HCT116 (cell line): ENCODE measurements at regions of chr18 and their contacts with region 1.

Region 1: GRCh38 chr18:50194631-50195532 is at the start of gene MYO5B:
- DNase-seq: peak; percentile 42
- ATAC-seq: peak; percentile 94
- H3K4me3 ChIP-seq: peak within 1 kb of the TSS; percentile 65 to 71
- H3K27ac ChIP-seq: peak within 1 kb of the TSS; percentile 55; the same call in 1 of the 2 replicates
- H3K4me1 ChIP-seq: peaks cover 6 to 21% of the 10 kb centered on the region in 2 experiments; a peak in 1 of 4 replicates
- H3K27me3 ChIP-seq: no peaks in the 10 kb centered on the region
- CTCF ChIP-seq: peak in 2 of 3 experiments; percentile 32 to 45; a peak in 3 of 6 replicates
- POLR2A ChIP-seq: no peak
- RAD21 ChIP-seq: peak; percentile 50
- total RNA-seq, gene MYO5B: 32.1 TPM

Region 2: DNA sequence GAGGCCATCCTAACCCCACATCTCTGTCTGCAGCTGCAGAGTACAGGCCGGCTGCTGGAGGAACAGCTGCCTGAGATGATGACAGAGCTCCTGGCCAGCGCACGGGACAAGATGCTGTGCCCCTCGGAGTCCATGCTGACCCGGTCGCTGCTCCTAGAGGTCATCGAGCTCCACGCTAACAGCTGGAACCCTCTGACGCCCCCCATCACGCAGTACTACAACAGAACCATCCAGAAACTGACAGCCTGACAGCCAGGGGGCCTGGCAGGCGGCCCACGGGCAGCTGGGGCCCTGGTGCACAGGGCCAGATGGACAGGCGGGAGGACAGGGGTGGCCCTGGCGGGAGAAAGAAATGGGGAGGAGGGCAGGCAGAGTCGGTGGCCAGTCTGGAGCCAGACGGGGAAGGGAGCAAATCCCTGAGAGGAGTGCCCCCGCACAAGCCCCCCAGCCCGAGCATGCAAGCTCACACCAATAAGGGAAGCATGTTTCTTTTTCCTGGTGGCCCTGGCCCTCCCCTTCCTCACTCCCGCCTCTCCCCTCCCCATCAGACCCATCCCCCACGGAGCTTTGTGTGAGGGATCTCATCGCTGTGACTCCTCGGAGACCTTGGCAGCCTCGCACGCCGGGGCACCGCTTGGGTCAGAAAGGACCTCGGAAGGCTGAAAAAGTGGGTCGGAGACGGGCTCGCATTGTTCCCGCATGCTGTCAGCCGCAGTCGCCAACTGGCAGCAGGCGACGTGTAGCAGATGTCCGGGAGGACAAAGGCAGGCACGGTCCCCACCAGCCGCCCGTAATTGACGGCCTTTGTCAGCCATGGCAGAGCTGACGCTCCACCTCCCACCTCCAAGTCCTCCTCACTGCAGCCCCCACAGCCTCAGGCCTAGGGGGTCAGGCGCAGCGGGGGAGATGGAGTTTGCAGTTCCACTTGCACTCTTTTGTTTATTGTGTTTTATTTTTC is 1335.3 kb before region 1 on chr18:
- CTCF ChIA-PET with region 1: no interaction called
- POLR2A ChIA-PET with region 1: no interaction called
- RAD21 ChIA-PET with region 1: no interaction called
- intact Hi-C with region 1: no loop called
- DNase-seq: no peak
- ATAC-seq: no peak
- H3K4me3 ChIP-seq: no peak overlapping the region
- H3K27ac ChIP-seq: no peak overlapping the region
- H3K4me1 ChIP-seq: peaks cover 0 to 6% of the 10 kb centered on the region in 2 experiments; a peak in 1 of 4 replicates
- H3K27me3 ChIP-seq: no peaks in the 10 kb centered on the region
- CTCF ChIP-seq: no peak
- POLR2A ChIP-seq: no peak
- RAD21 ChIP-seq: no peak

Region 3: GRCh38 chr18:50051288-50051687 is 143.6 kb before region 1 on chr18:
- CTCF ChIA-PET with region 1: no interaction called
- POLR2A ChIA-PET with region 1: no interaction called
- RAD21 ChIA-PET with region 1: no interaction called
- intact Hi-C with region 1: loop called (anchors 2 kb)
- DNase-seq: no peak
- ATAC-seq: peak; percentile 76
- H3K4me3 ChIP-seq: no peak overlapping the region
- H3K27ac ChIP-seq: no peak overlapping the region
- H3K4me1 ChIP-seq: no peaks in the 10 kb centered on the region
- H3K27me3 ChIP-seq: no peaks in the 10 kb centered on the region
- CTCF ChIP-seq: peak; percentile 41 to 58 (median 48); a peak in 5 of 6 replicates
- POLR2A ChIP-seq: no peak
- RAD21 ChIP-seq: peak; percentile 71

Region 4: DNA sequence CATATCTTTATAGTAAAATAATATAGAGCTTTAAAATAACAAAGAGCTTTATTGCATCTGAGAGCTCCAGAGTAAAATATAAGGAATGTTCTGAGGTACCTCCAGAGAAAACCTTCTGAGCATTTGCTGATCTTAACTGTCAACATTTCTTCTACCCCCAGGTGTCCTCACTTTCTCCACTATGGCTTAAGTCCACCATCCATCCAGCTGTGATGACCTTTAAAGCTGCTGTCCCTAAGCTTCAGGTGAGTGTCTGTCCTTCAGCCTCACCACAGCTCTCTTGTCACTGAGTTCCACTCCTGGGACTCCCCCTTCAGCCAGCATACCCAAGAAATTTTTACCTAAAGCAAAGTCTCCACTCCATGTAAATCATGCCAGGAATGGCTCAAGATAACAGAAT is 137.9 kb before region 1 on chr18:
- CTCF ChIA-PET with region 1: interaction called, 5 read pairs
- POLR2A ChIA-PET with region 1: no interaction called
- RAD21 ChIA-PET with region 1: no interaction called
- intact Hi-C with region 1: loop called (anchors 1 kb)
- DNase-seq: no peak
- ATAC-seq: no peak
- H3K4me3 ChIP-seq: no peak overlapping the region
- H3K27ac ChIP-seq: no peak overlapping the region
- H3K4me1 ChIP-seq: no peaks in the 10 kb centered on the region
- H3K27me3 ChIP-seq: no peaks in the 10 kb centered on the region
- CTCF ChIP-seq: peak in 1 of 3 experiments; percentile 19; a peak in 1 of 6 replicates
- POLR2A ChIP-seq: no peak
- RAD21 ChIP-seq: peak; percentile 39